ENCODE measurements at regions of chr9 and their contacts with region 1.

Region 1: DNA sequence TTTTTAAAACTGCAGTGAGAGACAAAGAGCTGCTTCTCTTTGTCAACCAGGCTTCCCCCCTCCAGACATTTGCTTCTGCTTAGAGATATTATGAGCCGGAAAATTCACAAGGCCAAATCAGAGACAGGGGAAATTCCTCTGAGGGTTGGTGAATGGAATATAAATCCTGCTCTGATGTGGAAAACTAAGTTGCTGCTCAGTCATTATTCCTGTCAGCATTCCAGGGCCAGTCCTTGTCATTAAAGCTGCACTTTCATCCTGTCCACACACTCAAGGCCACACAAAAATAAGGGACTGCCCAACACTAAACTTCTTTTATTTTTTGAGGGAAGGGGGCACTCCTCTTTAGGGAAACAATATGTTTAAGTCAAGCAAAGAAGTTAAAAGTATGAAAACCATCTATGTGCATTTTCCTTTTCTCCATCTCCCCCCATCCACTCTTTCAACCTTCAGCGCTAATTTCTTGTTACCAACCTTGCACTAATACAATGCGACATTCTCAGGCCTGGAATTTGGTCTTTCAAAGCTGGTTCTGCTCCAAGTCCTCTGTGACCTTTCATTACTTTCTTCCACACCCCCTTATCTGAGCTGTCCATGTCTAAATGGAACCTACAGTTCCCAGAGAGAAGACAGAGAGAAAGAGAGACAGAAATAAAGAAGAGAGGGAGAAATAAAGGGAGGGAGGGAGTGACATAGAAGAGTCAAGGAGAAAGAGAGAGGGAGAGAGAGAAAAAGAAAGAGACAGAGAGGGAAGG is 118.9 kb upstream of the S1PR3 start:
- DNase-seq: no peak

Region 2: GRCh38 chr9:88628114-88628513 is 244.3 kb before region 1 on chr9:
- intact Hi-C with region 1: loop called in 1 of 2 experiments (anchors 2 kb)
- DNase-seq: no peak